ENCODE measurements at regions of chr4 and their contacts with region 1.

Region 1: GRCh38 chr4:143335979-143336780 is 496 bp upstream of the GAB1 start:
- DNase-seq: peak; percentile 93
- H3K4me3 ChIP-seq: peak overlapping the region; percentile 79
- H3K27ac ChIP-seq: peak overlapping the region; percentile 88
- H3K4me1 ChIP-seq: peaks cover 10% of the 10 kb centered on the region
- H3K27me3 ChIP-seq: no peaks in the 10 kb centered on the region
- CTCF ChIP-seq: no peak

Region 2: GRCh38 chr4:143207557-143207956 is 128.6 kb before region 1 on chr4:
- CTCF ChIA-PET with region 1: no interaction called
- POLR2A ChIA-PET with region 1: no interaction called
- intact Hi-C with region 1: loop called (anchors 10 kb)
- DNase-seq: peak; percentile 34
- H3K4me3 ChIP-seq: no peak overlapping the region
- H3K27ac ChIP-seq: no peak overlapping the region
- H3K4me1 ChIP-seq: no peaks in the 10 kb centered on the region
- H3K27me3 ChIP-seq: no peaks in the 10 kb centered on the region
- CTCF ChIP-seq: peak; percentile 46; the same call in 1 of the 2 replicates

Region 3: DNA sequence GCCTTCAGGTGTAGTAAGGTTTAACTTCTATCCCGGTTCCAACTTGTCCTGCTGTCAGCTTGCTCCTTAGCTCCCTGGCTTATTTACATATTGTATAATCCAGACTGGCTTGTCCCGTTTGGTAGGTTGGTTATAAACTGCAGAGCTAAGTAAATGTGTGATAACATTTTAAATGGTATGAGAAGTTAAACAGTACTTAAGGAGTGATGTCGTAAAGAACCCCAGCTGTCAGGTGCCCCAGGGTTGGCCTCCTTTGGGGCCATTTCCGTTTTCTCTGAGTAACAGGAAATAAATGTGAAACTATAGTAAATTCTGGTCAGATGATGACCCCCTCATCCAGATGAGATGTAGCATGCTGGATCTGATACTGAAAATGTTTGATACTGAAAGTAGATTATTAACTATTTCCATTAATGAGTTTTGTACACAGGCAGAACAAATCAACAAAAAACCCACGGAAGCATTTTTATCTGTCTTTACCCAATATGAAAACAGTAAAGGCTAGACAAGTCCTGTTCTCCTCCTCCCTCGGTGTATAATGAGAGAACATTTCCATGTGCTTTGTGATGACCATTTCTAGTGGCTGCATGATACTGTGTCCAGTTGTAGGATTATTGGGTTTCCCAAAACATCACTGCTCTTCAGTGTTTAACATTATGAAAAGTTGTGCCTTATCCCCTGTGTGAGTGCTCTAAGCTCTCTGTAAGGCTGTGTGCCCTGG is 22.9 kb after region 1 on chr4:
- CTCF ChIA-PET with region 1: interaction called, 3 read pairs
- POLR2A ChIA-PET with region 1: no interaction called
- intact Hi-C with region 1: loop called (anchors 2 kb)
- DNase-seq: peak; percentile 96
- H3K4me3 ChIP-seq: peak overlapping the region; percentile 21
- H3K27ac ChIP-seq: peak overlapping the region; percentile 96
- H3K4me1 ChIP-seq: peaks cover 85% of the 10 kb centered on the region
- H3K27me3 ChIP-seq: no peaks in the 10 kb centered on the region
- CTCF ChIP-seq: no peak

Region 4: DNA sequence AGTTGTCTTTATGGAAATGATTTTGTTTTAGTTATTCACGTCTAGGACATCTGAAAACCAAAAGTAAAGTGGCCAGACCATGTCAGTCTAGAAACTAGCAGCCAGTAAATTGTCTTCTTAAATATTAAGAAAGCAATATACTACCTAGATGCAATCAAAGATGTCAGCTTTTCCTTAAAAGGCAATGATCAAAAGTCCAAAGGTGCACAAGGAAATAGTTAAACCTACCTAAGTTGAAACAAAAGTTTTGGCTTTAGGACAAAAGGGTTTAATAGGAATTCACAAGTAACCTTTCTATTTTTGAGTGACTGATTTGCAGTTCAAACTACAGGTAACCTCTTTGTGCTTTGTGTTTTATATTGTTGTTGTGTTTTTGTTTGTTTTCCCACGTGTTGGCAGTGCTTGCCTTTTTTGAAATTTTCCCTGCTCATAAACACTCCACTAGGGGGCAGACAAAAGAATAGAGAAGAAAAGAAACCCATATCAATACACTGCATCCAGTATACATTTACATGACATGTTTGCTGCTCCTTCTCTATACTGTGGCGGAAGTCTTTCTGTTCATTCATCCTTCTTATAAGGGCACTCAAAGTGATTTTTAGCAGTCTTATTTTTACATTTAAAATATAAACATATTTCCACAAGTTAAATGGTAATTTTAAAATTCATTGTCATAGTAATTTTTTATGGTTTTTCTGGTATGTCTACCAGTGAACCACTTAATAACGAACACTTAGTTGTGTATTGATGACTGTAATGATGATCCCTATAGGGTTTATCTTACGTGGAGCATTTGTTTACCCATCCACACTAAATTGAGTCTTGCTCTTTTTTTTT is 63.2 kb after region 1 on chr4:
- CTCF ChIA-PET with region 1: no interaction called
- POLR2A ChIA-PET with region 1: no interaction called
- intact Hi-C with region 1: loop called (anchors 2 kb)
- DNase-seq: peak; percentile 78
- H3K4me3 ChIP-seq: no peak overlapping the region
- H3K27ac ChIP-seq: no peak overlapping the region
- H3K4me1 ChIP-seq: peaks cover 34% of the 10 kb centered on the region
- H3K27me3 ChIP-seq: no peaks in the 10 kb centered on the region
- CTCF ChIP-seq: peak; percentile 89

Measured in A673 (cell line).